SK-N-SH (cell line): ENCODE measurements at regions of chr17 and their contacts with region 1.

Region 1: GRCh38 chr17:59311130-59311920 is 20.1 kb upstream of the YPEL2 start:
- DNase-seq: peak; percentile 81
- H3K4me3 ChIP-seq: no peak overlapping the region
- H3K27ac ChIP-seq: no peak overlapping the region
- H3K4me1 ChIP-seq: no peaks in the 10 kb centered on the region
- H3K27me3 ChIP-seq: no peaks in the 10 kb centered on the region
- CTCF ChIP-seq: peak; percentile 98
- EP300 ChIP-seq: no peak
- RAD21 ChIP-seq: peak; percentile 99

Region 2: GRCh38 chr17:59296771-59297500 is 14.4 kb before region 1 on chr17:
- CTCF ChIA-PET with region 1: interaction called, 11 read pairs
- POLR2A ChIA-PET with region 1: no interaction called
- DNase-seq: peak; percentile 46
- H3K4me3 ChIP-seq: no peak overlapping the region
- H3K27ac ChIP-seq: no peak overlapping the region
- H3K4me1 ChIP-seq: no peaks in the 10 kb centered on the region
- H3K27me3 ChIP-seq: no peaks in the 10 kb centered on the region
- CTCF ChIP-seq: no peak
- EP300 ChIP-seq: no peak
- RAD21 ChIP-seq: no peak

Region 3: GRCh38 chr17:59400858-59401257 is 89.5 kb after region 1 on chr17:
- CTCF ChIA-PET with region 1: interaction called, 10 read pairs
- POLR2A ChIA-PET with region 1: no interaction called
- DNase-seq: no peak
- H3K4me3 ChIP-seq: no peak overlapping the region
- H3K27ac ChIP-seq: peak overlapping the region; percentile 9 to 91; a peak in 2 of 4 replicates
- H3K4me1 ChIP-seq: peaks cover under 1 to 38% of the 10 kb centered on the region in 2 experiments; a peak in 2 of 4 replicates
- H3K27me3 ChIP-seq: no peaks in the 10 kb centered on the region
- CTCF ChIP-seq: no peak
- EP300 ChIP-seq: no peak
- RAD21 ChIP-seq: no peak; the same call in 1 of the 2 replicates

Region 4: DNA sequence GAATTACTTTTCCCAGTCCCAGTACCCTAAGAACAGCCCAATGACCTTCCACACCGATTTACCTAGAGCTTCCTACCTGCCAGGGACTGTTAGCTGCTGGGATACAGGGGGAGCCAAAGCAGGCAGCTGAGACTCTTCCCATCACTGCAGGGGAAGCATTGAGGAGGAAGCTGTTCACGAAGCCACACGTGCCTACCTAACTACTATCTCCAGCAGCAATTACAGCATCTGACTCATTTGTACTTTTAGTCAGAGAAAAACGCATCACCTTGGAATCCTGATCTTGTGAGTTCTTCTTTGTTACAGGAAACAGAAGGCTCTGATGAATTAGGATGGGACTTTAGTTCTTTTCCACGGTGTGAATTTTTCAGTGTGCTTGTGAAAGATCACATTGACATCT is 140.4 kb after region 1 on chr17:
- CTCF ChIA-PET with region 1: interaction called, 10 read pairs
- POLR2A ChIA-PET with region 1: no interaction called
- DNase-seq: no peak
- H3K4me3 ChIP-seq: no peak overlapping the region
- H3K27ac ChIP-seq: no peak overlapping the region
- H3K4me1 ChIP-seq: peaks cover 0 to 10% of the 10 kb centered on the region in 2 experiments; a peak in 1 of 4 replicates
- H3K27me3 ChIP-seq: no peaks in the 10 kb centered on the region
- CTCF ChIP-seq: 0 out of 2 replicates have a peak, but pooled peaks have one; percentile 13
- EP300 ChIP-seq: no peak
- RAD21 ChIP-seq: no peak

Region 5: DNA sequence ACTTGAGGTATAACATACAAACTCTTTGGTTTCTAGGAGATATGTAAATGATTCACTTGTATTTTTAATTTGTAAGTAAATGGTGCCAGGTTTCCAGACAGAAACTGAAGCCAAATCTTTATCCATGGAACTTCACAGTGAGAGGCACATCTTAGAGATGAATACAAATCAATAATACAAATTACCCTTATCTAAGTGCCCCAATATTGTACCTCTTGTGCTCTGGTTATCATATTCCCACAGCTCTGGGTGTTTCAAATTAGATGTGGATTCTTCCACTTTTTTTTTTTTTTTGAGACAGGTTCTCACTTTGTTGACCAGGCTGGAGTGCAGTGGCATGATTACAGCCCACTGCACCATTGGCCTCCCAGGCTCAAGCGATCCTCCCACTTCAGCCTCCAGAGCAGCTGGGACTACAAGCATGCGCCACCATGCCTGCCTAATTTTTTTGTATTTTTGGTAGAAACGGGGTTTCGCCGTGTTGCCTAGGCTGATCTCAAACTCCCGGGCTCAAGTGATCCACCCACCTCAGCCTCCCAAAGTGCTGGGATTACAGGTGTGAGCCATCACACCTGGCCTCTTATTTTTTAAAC is 216.1 kb after region 1 on chr17:
- CTCF ChIA-PET with region 1: interaction called, 17 read pairs
- POLR2A ChIA-PET with region 1: no interaction called
- DNase-seq: no peak
- H3K4me3 ChIP-seq: no peak overlapping the region
- H3K27ac ChIP-seq: no peak overlapping the region
- H3K4me1 ChIP-seq: no peaks in the 10 kb centered on the region; a peak in 1 of 4 replicates
- H3K27me3 ChIP-seq: no peaks in the 10 kb centered on the region
- CTCF ChIP-seq: no peak
- EP300 ChIP-seq: no peak
- RAD21 ChIP-seq: no peak

Region 6: GRCh38 chr17:59565171-59565969 is 254.0 kb after region 1 on chr17 and contains the start of gene DHX40:
- CTCF ChIA-PET with region 1: interaction called, 50 read pairs
- POLR2A ChIA-PET with region 1: interaction called, 3 read pairs
- DNase-seq: peak; percentile 99
- H3K4me3 ChIP-seq: peak within 1 kb of the TSS; percentile 91 to 99
- H3K27ac ChIP-seq: peak within 1 kb of the TSS; percentile 83 to 89
- H3K4me1 ChIP-seq: peaks cover 0 to 10% of the 10 kb centered on the region in 2 experiments; a peak in 3 of 4 replicates
- H3K27me3 ChIP-seq: no peaks in the 10 kb centered on the region
- CTCF ChIP-seq: no peak
- EP300 ChIP-seq: no peak
- RAD21 ChIP-seq: no peak
- polyA plus RNA-seq, gene DHX40: 33.8 and 45.5 TPM in 2 replicates